H1 (cell line): ENCODE measurements at regions of chr18 and their contacts with region 1.

Region 1: DNA sequence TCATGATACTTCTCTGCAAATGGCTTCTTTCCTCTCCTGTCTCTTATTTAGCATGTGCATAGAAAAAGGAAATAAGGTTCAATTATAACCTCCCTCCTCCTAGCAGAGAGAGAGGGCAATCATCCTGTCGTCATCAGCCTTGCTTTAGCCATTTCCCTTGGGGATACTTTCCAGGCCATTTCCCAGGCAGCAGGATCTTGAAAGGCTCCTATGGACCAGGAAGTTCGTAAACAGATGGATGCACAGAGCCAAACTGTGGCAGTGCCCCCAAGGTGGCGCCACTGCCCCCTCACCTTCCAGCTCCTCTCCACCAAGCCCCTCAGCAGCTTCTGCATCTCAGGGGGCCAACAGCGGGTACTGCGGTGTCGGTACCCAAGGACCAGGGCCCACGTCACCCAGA is 157.4 kb downstream of the DTNA start:
- DNase-seq: peak; percentile 46 to 63
- H3K4me3 ChIP-seq: no peak overlapping the region
- H3K27ac ChIP-seq: no peak overlapping the region
- H3K4me1 ChIP-seq: no peaks in the 10 kb centered on the region
- H3K27me3 ChIP-seq: no peaks in the 10 kb centered on the region
- CTCF ChIP-seq: peak; percentile 78 to 84 (median 80)
- EP300 ChIP-seq: no peak
- POLR2A ChIP-seq: no peak
- RAD21 ChIP-seq: peak; percentile 55 to 64

Region 2: DNA sequence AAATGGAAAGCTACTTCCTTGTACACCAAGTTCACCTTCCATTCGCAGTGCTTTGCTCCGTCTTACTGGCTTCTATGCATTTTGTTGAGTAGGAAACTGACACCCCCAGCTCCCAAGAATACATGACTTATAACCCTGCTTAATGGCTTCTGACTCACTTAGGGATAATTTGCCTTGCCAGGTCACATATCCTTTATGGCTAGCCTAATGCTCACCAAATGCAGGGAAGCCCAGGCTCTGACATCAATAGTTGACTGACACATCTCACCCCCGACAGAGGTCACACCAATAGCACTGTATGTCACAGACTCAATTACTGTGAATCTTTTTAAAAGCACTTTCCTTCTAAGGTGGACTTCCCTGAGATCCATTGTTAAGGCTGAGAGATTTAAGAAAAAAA is 10.2 kb before region 1 on chr18:
- CTCF ChIA-PET with region 1: interaction called, 13 read pairs
- POLR2A ChIA-PET with region 1: no interaction called
- DNase-seq: no peak
- H3K4me3 ChIP-seq: no peak overlapping the region
- H3K27ac ChIP-seq: no peak overlapping the region
- H3K4me1 ChIP-seq: no peaks in the 10 kb centered on the region
- H3K27me3 ChIP-seq: no peaks in the 10 kb centered on the region
- CTCF ChIP-seq: no peak
- EP300 ChIP-seq: no peak
- POLR2A ChIP-seq: no peak
- RAD21 ChIP-seq: no peak

Region 3: DNA sequence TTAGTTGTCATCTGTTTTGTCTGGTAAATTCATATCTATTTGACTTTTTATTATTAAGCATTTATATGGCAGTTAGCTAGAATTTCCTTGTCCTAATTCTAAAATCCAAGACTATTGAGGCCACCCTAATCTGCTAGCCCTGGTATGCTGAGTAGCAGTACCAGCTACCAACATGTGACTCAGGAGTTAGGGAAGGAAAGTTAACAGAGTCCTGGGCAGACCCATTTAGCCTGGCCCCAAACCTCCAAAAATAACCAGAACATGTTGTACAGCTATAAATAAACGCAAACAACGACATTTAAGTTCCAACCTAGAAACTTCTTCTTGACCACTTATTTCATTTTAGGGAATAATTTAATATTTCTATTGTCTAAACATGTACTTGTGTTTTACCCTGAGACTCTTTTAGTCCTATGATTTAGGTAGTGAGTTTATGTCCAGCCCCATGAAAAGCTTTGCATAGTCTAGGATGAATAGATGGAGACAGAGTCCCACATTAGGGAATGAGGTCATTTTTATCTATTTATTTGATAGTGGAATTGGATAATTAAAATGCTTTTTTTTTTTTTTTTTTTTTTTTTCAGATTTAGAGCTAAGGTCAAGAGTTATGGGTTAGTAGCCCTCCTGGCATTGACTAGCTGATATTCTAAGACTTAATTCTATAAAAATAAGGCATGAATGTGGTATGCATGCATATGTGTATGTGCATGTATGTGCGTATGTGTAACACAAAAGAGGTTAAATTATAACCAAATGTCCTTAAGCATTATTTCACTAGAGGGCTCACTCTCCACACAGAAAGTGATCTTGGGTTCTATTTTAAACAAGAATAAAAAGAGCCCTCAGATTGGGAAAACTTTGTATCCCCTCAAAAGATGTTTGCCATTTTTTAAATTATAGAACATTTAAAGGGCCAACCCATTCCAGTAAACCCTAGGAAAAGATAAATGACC is 13.6 kb after region 1 on chr18:
- CTCF ChIA-PET with region 1: interaction called, 18 read pairs
- POLR2A ChIA-PET with region 1: no interaction called
- DNase-seq: no peak
- H3K4me3 ChIP-seq: no peak overlapping the region
- H3K27ac ChIP-seq: no peak overlapping the region
- H3K4me1 ChIP-seq: no peaks in the 10 kb centered on the region
- H3K27me3 ChIP-seq: no peaks in the 10 kb centered on the region
- CTCF ChIP-seq: no peak
- EP300 ChIP-seq: no peak
- POLR2A ChIP-seq: no peak
- RAD21 ChIP-seq: peak; percentile 33 to 36; a peak in 3 of 4 replicates

Region 4: GRCh38 chr18:35029770-35030169 is 162.2 kb after region 1 on chr18:
- CTCF ChIA-PET with region 1: no interaction called
- POLR2A ChIA-PET with region 1: no interaction called
- DNase-seq: no peak
- H3K4me3 ChIP-seq: no peak overlapping the region
- H3K27ac ChIP-seq: no peak overlapping the region
- H3K4me1 ChIP-seq: peaks cover 0 to 7% (median 0%) of the 10 kb centered on the region in 4 experiments; a peak in 2 of 7 replicates
- H3K27me3 ChIP-seq: no peaks in the 10 kb centered on the region
- CTCF ChIP-seq: no peak
- EP300 ChIP-seq: no peak
- POLR2A ChIP-seq: no peak
- RAD21 ChIP-seq: no peak